ENCODE measurements at regions of chr22 and their contacts with region 1.

Region 1: GRCh38 chr22:23767673-23768548 is at the start of gene CHCHD10:
- DNase-seq: no peak
- H3K4me3 ChIP-seq: peak within 1 kb of the TSS; percentile 67
- CTCF ChIP-seq: peak; percentile 96

Region 2: DNA sequence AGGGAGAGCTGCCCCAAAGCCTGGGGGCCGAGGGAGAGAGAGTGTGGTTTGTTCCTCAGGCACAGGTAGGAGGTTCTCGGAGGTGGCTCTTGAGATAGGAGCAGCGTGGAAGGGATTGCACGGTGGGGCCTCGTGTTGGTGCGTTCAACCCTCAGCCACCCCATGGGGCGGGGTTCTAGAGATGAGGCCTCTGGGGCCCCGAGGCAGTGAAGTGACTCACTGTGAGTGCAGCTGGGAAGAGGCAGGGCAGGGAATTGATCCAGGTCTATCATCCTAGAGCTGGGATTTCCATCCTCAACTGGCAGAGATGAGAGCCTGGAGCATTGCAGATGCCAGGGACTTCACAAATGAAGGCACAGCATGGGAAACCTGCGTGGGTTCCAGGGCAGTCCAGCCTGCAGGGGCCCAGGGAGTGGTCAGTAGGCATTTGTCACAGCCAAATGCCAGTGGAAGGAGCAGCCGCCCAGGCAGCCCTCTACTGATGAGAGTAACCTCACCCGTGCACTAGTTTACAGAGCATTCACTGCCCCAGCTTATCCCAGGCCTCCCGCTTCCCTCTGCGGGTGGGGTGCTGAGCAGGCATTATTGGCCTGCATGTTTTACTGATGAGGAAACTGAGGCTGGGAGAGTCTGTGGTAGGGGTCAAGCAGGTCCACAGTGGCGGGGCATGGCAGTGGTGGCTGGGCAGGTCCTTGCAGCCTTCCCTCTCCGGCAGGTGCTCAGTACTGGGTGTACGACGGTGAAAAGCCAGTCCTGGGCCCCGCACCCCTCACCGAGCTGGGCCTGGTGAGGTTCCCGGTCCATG is 13.8 kb after region 1 on chr22:
- CTCF ChIA-PET with region 1: interaction called, 15 read pairs
- POLR2A ChIA-PET with region 1: interaction called, 3 read pairs
- DNase-seq: no peak
- H3K4me3 ChIP-seq: no peak overlapping the region
- CTCF ChIP-seq: no peak

Region 3: GRCh38 chr22:23812378-23812777 is 44.5 kb after region 1 on chr22:
- CTCF ChIA-PET with region 1: interaction called, 12 read pairs
- POLR2A ChIA-PET with region 1: no interaction called
- DNase-seq: no peak
- H3K4me3 ChIP-seq: no peak overlapping the region
- CTCF ChIP-seq: no peak

Region 4: GRCh38 chr22:23849009-23850006 is 81.4 kb after region 1 on chr22:
- CTCF ChIA-PET with region 1: interaction called, 387 read pairs
- POLR2A ChIA-PET with region 1: no interaction called
- DNase-seq: no peak
- H3K4me3 ChIP-seq: peak overlapping the region; percentile 25; the same call in 1 of the 2 replicates
- CTCF ChIP-seq: peak; percentile 95